Tibial artery (tissue), 4 donors: ENCODE measurements at regions of chr16 and their contacts with region 1.

Region 1: GRCh38 chr16:714558-715476 is at the start of gene METRN:
- DNase-seq: peak; percentile 90 to 94
- H3K4me3 ChIP-seq: peak within 1 kb of the TSS; percentile 56 to 75
- H3K27ac ChIP-seq: no peak within 1 kb of the TSS
- H3K4me1 ChIP-seq: peaks cover 0 to 44% (median 27%) of the 10 kb centered on the region in 4 donors
- H3K27me3 ChIP-seq: peaks cover 0 to 44% of the 10 kb centered on the region in 2 donors
- CTCF ChIP-seq: no peak

Region 2: DNA sequence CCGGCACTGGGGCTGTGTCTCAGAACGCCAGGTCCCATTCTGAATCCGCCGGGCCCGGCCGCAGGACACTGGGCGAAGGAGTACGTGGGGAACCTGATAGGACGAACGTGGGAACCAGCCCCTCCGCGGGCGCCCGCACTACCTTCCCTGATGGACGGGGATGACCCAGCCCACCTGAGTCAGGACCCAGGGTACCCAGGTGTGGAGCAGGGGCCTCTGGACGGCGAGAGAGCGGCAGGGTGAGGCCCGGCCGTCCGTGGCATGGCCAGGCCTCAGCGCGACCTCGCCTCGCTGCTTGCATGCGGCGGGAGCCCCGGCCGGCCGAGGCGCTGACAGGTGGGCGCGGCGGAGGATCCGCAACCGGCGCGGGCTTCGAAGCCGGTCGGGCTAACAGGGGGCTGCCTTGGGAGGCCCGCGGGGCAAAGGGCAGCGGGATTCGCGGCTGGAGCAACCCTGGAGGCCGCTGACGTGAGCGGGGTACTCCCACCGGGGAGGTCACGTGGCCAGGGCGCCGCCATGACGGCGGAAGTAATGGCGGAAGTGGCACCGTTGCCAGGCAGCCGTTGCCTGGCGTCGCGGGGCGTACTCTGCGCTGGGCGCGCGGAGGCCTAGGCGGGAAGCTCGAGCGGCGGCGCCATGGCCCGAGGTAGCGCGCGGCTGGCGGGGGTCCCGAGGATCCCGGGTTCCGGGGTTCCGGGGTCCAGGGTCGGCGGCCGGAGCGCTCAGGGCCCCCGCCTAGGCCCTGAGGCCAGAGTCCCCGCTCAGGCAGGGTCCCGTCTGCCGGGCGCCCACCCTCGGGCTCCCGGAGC is 65.8 kb before region 1 on chr16 and contains the start of gene WDR90:
- intact Hi-C with region 1: no loop called
- DNase-seq: peak; percentile 92 to 94
- H3K4me3 ChIP-seq: peak within 1 kb of the TSS; percentile 81 to 84
- H3K27ac ChIP-seq: peak within 1 kb of the TSS; percentile 82 to 90
- H3K4me1 ChIP-seq: peaks cover 7 to 46% (median 23%) of the 10 kb centered on the region in 4 donors
- H3K27me3 ChIP-seq: no peaks in the 10 kb centered on the region
- CTCF ChIP-seq: no peak

Region 3: GRCh38 chr16:740764-741505 is 26.1 kb after region 1 on chr16 and contains the start of gene CIAO3:
- intact Hi-C with region 1: loop called (anchors 2 kb)
- DNase-seq: peak; percentile 78 to 92
- H3K4me3 ChIP-seq: peak within 1 kb of the TSS; percentile 71 to 88
- H3K27ac ChIP-seq: peak within 1 kb of the TSS; percentile 65 to 69
- H3K4me1 ChIP-seq: peaks cover 4 to 16% (median 16%) of the 10 kb centered on the region in 4 donors
- H3K27me3 ChIP-seq: peaks cover 0 to 22% of the 10 kb centered on the region in 2 donors
- CTCF ChIP-seq: peak; percentile 93 to 95

Region 4: GRCh38 chr16:754656-755055 is 39.8 kb after region 1 on chr16:
- intact Hi-C with region 1: no loop called
- DNase-seq: no peak
- H3K4me3 ChIP-seq: no peak overlapping the region
- H3K27ac ChIP-seq: no peak overlapping the region
- H3K4me1 ChIP-seq: peaks cover 0 to 5% (median 0%) of the 10 kb centered on the region in 4 donors
- H3K27me3 ChIP-seq: peaks cover 0 to 10% of the 10 kb centered on the region in 2 donors
- CTCF ChIP-seq: no peak

Region 5: DNA sequence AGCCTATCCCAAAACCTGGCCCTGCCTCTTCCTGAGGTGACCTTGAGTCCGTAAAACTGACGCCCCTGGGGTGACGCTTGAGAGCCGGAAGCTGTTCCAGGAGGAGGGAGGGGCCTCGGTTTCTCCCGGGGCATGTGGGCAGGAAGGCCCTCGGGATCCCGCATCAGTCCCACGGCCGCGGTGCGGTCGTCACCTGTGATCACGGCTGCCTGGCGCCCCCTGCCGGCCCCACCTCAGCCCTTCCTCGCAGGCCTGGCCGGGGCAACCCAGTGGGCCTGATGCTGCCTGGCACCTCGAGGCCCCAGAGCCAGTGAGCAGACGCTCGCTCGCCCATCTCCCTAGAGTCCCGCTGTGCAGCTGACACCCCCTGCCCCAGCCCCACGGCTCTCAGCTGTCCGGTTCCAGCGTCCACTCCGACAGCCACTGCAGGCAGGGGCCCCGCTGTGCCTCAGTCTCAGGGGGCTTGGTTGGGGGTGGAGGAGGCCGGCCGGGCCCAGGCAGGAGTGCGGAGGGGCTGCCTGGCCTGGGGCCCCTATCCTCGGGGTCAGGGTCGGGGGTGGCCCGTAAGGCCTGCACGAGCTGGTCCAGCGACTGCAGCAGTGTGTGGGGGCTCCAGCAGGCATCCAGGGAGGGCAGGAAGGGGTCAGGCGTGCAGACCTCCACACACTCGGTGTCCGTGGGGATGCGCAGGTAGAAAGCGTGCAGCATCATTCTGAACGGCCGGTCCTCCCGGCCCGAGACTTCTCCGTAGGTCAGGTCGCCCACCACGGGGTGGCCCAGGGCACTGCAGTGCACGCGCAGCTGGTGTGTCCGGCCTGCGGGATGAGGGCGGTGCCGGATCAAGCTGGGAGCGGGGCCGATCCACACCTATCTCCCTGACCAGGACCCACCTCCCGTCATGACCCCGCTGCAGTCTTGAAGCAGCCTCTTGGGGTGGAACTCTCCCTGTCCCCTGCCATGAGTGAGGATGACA is 71.0 kb after region 1 on chr16:
- intact Hi-C with region 1: loop called (anchors 2 kb)
- DNase-seq: peak in 1 of 2 donors; percentile 38
- H3K4me3 ChIP-seq: no peak overlapping the region
- H3K27ac ChIP-seq: no peak overlapping the region
- H3K4me1 ChIP-seq: peaks cover 0 to 49% (median 21%) of the 10 kb centered on the region in 4 donors
- H3K27me3 ChIP-seq: peaks cover 0 to 33% of the 10 kb centered on the region in 2 donors
- CTCF ChIP-seq: peak; percentile 55 to 60

Region 6: DNA sequence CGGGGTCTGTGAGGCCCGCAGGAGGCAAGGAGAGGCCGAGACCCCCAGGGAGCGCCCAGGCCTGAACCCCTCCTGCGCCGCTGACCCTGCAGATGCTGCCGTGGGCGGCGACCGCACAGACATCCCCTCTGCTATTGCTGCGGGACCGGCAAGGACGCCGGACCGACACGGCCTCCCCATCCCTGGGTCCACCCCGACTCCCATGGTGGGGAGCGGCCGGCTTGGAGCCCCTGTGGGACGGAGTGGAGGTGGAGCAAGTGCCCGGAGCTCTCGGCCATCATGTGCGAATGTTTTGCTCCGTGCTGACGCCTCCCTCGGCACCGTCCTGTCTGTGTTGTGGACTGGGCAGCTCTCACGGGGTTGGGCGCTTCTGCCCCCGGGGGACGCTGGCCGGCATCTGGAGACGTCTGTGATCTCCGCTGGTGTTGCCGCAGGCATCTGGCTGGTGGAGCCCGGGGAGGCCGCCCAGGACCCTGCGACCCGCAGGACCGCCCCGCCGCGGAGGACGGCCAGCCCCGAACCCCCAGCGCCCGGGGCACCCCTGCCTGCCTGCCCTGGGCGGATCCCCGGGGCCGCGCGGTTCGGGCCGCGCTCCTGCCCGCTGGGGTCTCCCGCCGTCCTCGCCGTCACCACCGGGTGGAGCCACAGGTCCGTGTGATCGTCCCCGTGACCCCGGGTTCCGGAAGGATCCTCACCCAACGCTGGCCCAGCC is 98.5 kb after region 1 on chr16:
- intact Hi-C with region 1: no loop called
- DNase-seq: no peak
- H3K4me3 ChIP-seq: no peak overlapping the region
- H3K27ac ChIP-seq: no peak overlapping the region
- H3K4me1 ChIP-seq: peaks cover 0 to 20% (median 2%) of the 10 kb centered on the region in 4 donors
- H3K27me3 ChIP-seq: peaks cover 0 to 76% of the 10 kb centered on the region in 2 donors
- CTCF ChIP-seq: peak; percentile 20 to 22

Region 7: DNA sequence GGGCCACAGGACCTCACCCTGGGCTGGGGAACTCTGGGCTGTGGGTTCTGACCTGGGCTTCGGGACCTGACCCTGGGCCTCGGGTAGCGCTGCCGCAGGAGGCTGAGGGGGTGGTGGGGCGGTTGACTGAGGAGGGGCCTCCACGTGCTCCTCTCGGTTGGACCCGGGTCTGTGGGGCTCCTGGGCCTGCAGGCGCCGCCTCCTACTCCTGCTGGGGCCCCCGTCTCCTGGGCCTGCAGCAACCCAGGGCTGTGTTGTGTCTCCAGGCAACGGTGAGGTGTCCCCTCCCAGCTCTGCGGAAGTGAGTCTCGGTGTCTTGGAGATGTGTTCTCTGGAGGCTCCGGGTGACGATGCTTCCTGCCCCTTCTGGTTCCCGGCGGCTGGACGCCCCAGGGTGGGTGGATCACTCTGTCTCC is 127.3 kb after region 1 on chr16:
- intact Hi-C with region 1: no loop called
- DNase-seq: no peak
- H3K4me3 ChIP-seq: no peak overlapping the region
- H3K27ac ChIP-seq: no peak overlapping the region
- H3K4me1 ChIP-seq: no peaks in the 10 kb centered on the region
- H3K27me3 ChIP-seq: peaks cover 0 to 42% of the 10 kb centered on the region in 2 donors
- CTCF ChIP-seq: no peak